ENCODE measurements at regions of chr16 and their contacts with region 1.

Region 1: DNA sequence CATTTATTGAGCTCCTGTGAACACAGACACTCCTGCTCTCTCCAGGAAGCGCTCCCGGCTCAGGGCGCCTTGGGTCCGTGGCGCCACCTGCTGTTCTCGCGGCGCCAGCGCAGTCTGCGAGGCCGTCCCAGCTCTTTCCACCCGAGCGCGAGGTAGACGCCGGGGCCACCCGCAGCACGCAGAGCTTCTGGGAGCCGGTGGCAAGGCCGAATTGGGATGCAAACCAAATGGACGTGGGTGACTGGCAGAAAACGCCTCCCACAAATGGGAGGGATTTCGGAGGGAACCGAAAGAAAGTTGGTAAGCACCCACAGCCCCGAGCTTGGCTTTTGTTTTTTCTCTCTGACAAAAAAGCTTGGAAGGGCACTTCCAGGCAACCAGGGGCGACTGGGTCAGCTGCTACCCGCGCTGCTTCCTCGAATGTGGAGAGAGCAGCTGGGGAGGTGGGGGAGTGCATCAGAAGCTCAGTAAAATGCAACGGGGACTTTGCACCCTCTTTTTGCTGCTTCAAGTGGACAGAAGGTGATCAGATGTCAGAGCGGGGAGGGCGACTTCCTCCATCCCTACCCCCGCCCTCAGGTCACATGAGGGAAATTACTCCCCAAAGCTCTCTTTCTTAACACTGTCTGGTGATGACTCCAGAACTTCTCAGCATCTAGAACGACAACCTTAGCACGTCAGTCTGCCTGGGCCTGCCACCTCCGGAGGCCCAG is 13.5 kb upstream of the N4BP1 start:
- DNase-seq: peak; percentile 96
- H3K4me3 Mint-ChIP-seq: peak overlapping the region; percentile 80
- H3K27ac Mint-ChIP-seq: peak overlapping the region; percentile 79
- H3K4me1 Mint-ChIP-seq: peaks cover 25% of the 10 kb centered on the region
- H3K27me3 Mint-ChIP-seq: peaks cover 10% of the 10 kb centered on the region

Region 2: DNA sequence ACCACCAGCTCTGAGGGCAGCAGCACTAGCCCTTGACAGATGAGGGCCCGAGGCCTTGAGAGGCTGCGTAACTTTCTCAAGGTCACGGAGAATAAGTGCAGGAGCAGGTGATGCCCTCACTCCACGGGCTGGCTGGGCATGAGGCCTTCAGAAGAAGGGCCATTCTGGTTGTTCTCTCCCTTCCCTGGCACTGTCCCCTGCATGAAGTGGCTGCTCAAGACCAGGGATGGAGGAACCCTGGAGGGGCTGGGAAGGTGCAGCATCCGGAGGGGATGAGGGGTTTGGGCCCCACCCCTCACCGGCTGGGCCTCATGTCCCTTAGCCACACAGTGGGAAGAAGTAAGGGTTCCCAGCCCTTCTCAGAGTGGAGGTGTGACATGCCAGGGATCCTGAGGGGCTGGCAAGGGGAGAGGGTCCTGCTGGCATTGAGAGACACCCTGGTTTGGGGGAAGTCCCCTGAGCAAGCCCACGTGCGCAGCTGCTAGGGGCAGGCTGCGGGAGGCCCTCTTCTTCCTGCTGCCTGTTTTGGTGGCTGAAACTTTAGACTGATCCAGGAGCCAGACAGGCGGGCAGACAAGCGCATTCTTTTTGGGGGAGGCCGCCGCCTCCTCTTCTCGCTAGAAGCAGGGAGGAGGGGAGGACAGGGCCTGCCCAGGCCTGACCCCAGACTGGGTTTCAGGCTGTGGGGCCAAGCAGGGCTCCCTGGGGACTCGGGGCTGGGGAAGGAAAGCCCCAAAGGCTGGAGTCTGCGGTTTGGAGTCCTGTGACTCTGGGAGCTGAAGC is 87.4 kb before region 1 on chr16:
- intact Hi-C with region 1: loop called (anchors 5 kb)
- DNase-seq: no peak
- H3K4me3 Mint-ChIP-seq: no peak overlapping the region
- H3K27ac Mint-ChIP-seq: peak overlapping the region; percentile 25
- H3K4me1 Mint-ChIP-seq: peaks cover 11% of the 10 kb centered on the region
- H3K27me3 Mint-ChIP-seq: no peaks in the 10 kb centered on the region

Region 3: GRCh38 chr16:48546774-48547173 is 76.7 kb before region 1 on chr16:
- intact Hi-C with region 1: no loop called
- DNase-seq: no peak
- H3K4me3 Mint-ChIP-seq: no peak overlapping the region
- H3K27ac Mint-ChIP-seq: no peak overlapping the region
- H3K4me1 Mint-ChIP-seq: peaks cover 12% of the 10 kb centered on the region
- H3K27me3 Mint-ChIP-seq: no peaks in the 10 kb centered on the region

Measured in activated CD4-positive, alpha-beta T cell treated with anti-CD3 and anti-CD28 coated beads, Interleukin-2, amount 10 ng/mL, durations not matched to agents 24 days and 14 days (primary cell).